ENCODE measurements at regions of chr20 and their contacts with region 1.

Region 1: GRCh38 chr20:19661717-19662636 is 96.1 kb upstream of the RIN2 start:
- DNase-seq: peak; percentile 21 to 66
- ATAC-seq: peak; percentile 49 to 81 (median 68)
- H3K4me3 ChIP-seq: no peak overlapping the region
- H3K4me3 Mint-ChIP-seq: no peak overlapping the region
- H3K27ac ChIP-seq: no peak overlapping the region
- H3K27ac Mint-ChIP-seq: no peak overlapping the region
- H3K4me1 ChIP-seq: peaks cover 8% of the 10 kb centered on the region
- H3K4me1 Mint-ChIP-seq: peaks cover 4 to 8% of the 10 kb centered on the region in 2 donors
- H3K27me3 ChIP-seq: peaks cover 2% of the 10 kb centered on the region
- H3K27me3 Mint-ChIP-seq: peaks cover 14 to 31% of the 10 kb centered on the region in 2 donors
- CTCF ChIP-seq: peak; percentile 97

Region 2: DNA sequence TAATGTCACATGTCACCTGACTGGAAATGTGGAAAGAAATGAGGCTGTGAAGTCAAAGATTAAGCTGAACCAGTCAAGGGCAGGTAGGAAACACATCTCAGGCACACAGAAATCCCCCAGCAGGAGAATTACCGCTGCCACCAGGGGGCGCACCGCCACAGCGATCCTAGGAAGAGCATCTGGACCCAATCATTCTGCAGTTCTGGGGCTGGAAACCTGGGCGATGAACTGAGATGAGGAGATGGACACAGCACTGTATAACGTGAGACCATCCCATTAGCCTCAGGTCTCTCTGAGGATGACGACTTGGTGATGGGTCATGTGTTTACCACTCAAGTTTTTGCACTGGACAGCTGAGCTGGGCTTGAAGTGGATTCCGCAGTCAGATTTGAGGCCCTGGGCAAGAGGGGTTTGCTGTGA is 456.0 kb before region 1 on chr20:
- intact Hi-C with region 1: loop called (anchors 1 kb)
- DNase-seq: peak; percentile 62 to 69
- ATAC-seq: peak in 2 of 3 donors; percentile 59 to 67
- H3K4me3 ChIP-seq: no peak overlapping the region
- H3K4me3 Mint-ChIP-seq: no peak overlapping the region
- H3K27ac ChIP-seq: no peak overlapping the region
- H3K27ac Mint-ChIP-seq: no peak overlapping the region
- H3K4me1 ChIP-seq: no peaks in the 10 kb centered on the region
- H3K4me1 Mint-ChIP-seq: no peaks in the 10 kb centered on the region
- H3K27me3 ChIP-seq: no peaks in the 10 kb centered on the region
- H3K27me3 Mint-ChIP-seq: peaks cover 30 to 64% of the 10 kb centered on the region in 2 donors
- CTCF ChIP-seq: peak; percentile 88